ENCODE measurements at regions of chr1 and their contacts with region 1.

Region 1: DNA sequence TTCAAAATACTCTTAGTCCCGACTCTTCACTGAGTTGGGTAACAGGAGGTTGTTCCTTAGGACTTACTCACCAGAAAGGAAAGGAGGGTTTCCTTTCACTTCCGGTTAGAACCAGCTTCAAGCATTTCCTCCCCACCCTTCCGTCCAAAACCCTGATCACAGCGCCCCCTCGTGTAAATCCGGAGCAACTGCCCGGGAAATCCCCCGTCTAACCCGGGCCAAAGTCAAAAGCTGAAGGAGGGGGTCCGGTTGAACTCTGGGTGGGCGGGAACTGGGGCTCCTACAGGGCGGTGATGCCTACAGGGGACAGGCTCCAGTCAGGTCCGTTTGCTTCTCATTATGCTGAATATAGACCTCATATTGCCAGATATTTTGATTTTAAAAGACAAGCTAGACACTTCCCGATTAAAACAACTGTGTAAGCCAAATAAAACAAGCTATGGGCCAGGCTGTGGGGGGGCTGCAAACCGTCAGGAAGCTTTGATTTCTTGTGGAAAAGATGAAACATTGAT is 15.0 kb upstream of the MTARC2 start:
- DNase-seq: peak; percentile 67
- ATAC-seq: peak; percentile 95
- H3K4me3 Mint-ChIP-seq: peak overlapping the region; percentile 47
- H3K27ac Mint-ChIP-seq: peak overlapping the region; percentile 30
- H3K4me1 Mint-ChIP-seq: peaks cover 25% of the 10 kb centered on the region
- H3K27me3 Mint-ChIP-seq: no peaks in the 10 kb centered on the region
- CTCF ChIP-seq: peak; percentile 51

Region 2: GRCh38 chr1:220281159-220281574 is 452.0 kb before region 1 on chr1:
- CTCF ChIA-PET with region 1: interaction called, 9 read pairs
- POLR2A ChIA-PET with region 1: no interaction called
- intact Hi-C with region 1: loop called (anchors 5 kb)
- DNase-seq: no peak
- ATAC-seq: no peak
- H3K4me3 Mint-ChIP-seq: no peak overlapping the region
- H3K27ac Mint-ChIP-seq: no peak overlapping the region
- H3K4me1 Mint-ChIP-seq: no peaks in the 10 kb centered on the region
- H3K27me3 Mint-ChIP-seq: peaks cover 8% of the 10 kb centered on the region
- CTCF ChIP-seq: no peak

Region 3: GRCh38 chr1:220680085-220680687 is 53.0 kb before region 1 on chr1:
- CTCF ChIA-PET with region 1: interaction called, 37 read pairs
- POLR2A ChIA-PET with region 1: no interaction called
- intact Hi-C with region 1: loop called (anchors 1 kb)
- DNase-seq: no peak
- ATAC-seq: peak; percentile 83
- H3K4me3 Mint-ChIP-seq: no peak overlapping the region
- H3K27ac Mint-ChIP-seq: no peak overlapping the region
- H3K4me1 Mint-ChIP-seq: peaks cover 3% of the 10 kb centered on the region
- H3K27me3 Mint-ChIP-seq: no peaks in the 10 kb centered on the region
- CTCF ChIP-seq: no peak

Region 4: GRCh38 chr1:220711056-220711809 is 21.9 kb before region 1 on chr1:
- CTCF ChIA-PET with region 1: interaction called, 15 read pairs
- POLR2A ChIA-PET with region 1: interaction called, 6 read pairs
- intact Hi-C with region 1: loop called (anchors 2 kb)
- DNase-seq: no peak
- ATAC-seq: peak; percentile 84
- H3K4me3 Mint-ChIP-seq: peak overlapping the region; percentile 60
- H3K27ac Mint-ChIP-seq: peak overlapping the region; percentile 77
- H3K4me1 Mint-ChIP-seq: peaks cover 48% of the 10 kb centered on the region
- H3K27me3 Mint-ChIP-seq: no peaks in the 10 kb centered on the region
- CTCF ChIP-seq: no peak

Region 5: DNA sequence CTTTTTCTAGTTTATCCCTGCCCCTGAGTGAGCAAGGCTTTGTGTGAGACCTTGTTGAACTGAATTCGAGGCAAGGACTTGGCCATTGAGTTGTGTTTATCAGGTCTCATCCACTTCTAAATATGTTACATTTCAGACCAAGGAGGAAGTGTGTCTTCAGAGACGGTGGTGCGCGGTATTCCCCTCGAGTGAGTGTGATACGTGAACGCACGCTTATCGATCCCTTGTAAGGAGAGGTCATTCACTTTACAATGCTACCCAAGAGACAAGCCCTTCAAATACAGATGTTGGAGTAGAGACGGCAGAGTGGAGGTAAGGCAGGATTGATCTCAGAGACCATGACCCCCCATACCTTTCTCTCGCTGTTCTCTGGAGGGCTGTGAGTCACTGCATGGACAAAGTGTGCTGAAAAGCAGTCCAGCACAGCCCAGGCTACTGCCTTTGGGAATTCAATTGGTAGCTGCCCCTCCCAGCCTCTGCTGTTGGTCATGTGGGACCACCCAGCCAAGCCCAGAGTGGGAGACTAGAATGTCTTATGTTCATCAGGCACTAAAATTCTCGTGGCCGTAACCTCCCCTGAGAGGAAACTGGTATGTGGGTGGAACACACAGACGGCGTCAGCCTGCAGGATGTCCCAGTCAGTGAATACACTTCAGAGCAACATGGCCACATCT is 37.2 kb after region 1 on chr1:
- CTCF ChIA-PET with region 1: interaction called, 44 read pairs
- POLR2A ChIA-PET with region 1: interaction called, 5 read pairs
- intact Hi-C with region 1: loop called (anchors 1 kb)
- DNase-seq: no peak
- ATAC-seq: peak; percentile 88
- H3K4me3 Mint-ChIP-seq: peak overlapping the region; percentile 82
- H3K27ac Mint-ChIP-seq: peak overlapping the region; percentile 96
- H3K4me1 Mint-ChIP-seq: peaks cover 48% of the 10 kb centered on the region
- H3K27me3 Mint-ChIP-seq: no peaks in the 10 kb centered on the region
- CTCF ChIP-seq: no peak